ENCODE measurements at regions of chr5 and their contacts with region 1.

Region 1: GRCh38 chr5:33997331-33997983 is 10.4 kb downstream of the AMACR start:
- DNase-seq: peak; percentile 87
- H3K4me3 ChIP-seq: no peak overlapping the region
- H3K27ac ChIP-seq: no peak overlapping the region
- H3K4me1 ChIP-seq: no peaks in the 10 kb centered on the region
- H3K27me3 ChIP-seq: no peaks in the 10 kb centered on the region
- CTCF ChIP-seq: peak; percentile 64 to 69
- POLR2A ChIP-seq: no peak

Region 2: DNA sequence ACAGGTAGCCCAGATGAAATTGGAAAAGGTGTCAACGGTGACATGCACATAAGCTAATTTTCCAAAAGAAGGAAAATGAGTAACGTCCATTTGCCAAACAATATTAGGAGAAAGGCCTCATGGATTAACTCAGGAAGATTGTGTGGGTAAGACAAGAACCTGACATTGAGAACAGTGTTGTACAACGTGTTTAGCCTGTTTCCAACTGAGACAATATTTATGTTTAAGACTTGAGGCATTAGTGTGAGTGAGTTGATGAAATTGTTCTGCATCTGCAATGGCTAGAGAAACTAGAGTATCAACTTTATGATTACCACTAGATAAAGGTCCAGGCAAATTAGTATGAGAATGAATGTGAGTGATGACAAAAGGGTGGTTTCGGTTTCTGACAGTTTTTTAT is 467.4 kb after region 1 on chr5:
- CTCF ChIA-PET with region 1: interaction called, 13 read pairs
- POLR2A ChIA-PET with region 1: no interaction called
- dilution Hi-C with region 1: no loop called
- intact Hi-C with region 1: loop called (anchors 1 kb)
- DNase-seq: no peak
- H3K4me3 ChIP-seq: no peak overlapping the region
- H3K27ac ChIP-seq: no peak overlapping the region
- H3K4me1 ChIP-seq: no peaks in the 10 kb centered on the region
- H3K27me3 ChIP-seq: peaks cover 12 to 17% of the 10 kb centered on the region in 2 experiments
- CTCF ChIP-seq: no peak
- POLR2A ChIP-seq: no peak

Region 3: GRCh38 chr5:35513612-35514011 is 1516.2 kb after region 1 on chr5:
- CTCF ChIA-PET with region 1: no interaction called
- POLR2A ChIA-PET with region 1: no interaction called
- dilution Hi-C with region 1: no loop called
- intact Hi-C with region 1: no loop called
- DNase-seq: no peak
- H3K4me3 ChIP-seq: no peak overlapping the region
- H3K27ac ChIP-seq: no peak overlapping the region
- H3K4me1 ChIP-seq: no peaks in the 10 kb centered on the region
- H3K27me3 ChIP-seq: no peaks in the 10 kb centered on the region
- CTCF ChIP-seq: no peak
- POLR2A ChIP-seq: no peak

Measured in endothelial cell of umbilical vein (primary cell).